ENCODE measurements at regions of chr9 and their contacts with region 1.

Region 1: DNA sequence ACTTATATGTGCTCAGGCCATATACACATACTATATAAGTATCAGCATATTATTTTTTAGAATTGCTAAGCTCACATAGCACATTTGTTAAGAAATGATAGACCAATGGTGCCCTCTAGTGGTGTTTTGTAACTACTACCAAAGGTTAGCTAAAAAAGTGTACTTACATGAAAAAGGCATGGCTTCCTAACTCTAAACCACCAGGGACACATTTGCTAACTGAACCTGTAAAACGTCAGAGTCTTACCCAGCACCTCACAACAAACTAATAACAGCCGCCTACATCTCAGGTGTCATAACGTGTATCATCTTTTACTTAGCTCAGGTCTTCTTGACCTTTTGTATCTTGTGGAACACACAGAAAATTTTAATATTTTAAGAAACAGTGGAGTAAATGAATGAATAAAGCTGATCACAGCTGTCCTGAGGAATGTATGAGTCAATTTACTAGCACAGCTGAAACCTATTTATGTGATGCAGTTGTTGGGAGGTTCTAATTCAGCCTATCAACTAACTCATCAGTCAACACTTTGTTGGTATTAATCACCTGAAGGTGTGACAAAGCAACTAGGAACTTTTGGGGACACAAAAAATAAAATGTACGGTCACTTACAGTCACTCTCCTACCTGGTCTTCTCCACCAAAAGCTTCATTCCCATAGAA is 72.9 kb downstream of the BAAT start:
- DNase-seq: peak; percentile 38
- H3K4me3 ChIP-seq: no peak overlapping the region; a peak in 1 of 4 replicates
- H3K27ac ChIP-seq: no peak overlapping the region
- H3K4me1 ChIP-seq: peaks cover 0 to 5% of the 10 kb centered on the region in 2 experiments; a peak in 2 of 4 replicates
- H3K27me3 ChIP-seq: peaks cover 11% of the 10 kb centered on the region
- CTCF ChIP-seq: peak; percentile 82
- EP300 ChIP-seq: no peak
- RAD21 ChIP-seq: peak; percentile 85

Region 2: DNA sequence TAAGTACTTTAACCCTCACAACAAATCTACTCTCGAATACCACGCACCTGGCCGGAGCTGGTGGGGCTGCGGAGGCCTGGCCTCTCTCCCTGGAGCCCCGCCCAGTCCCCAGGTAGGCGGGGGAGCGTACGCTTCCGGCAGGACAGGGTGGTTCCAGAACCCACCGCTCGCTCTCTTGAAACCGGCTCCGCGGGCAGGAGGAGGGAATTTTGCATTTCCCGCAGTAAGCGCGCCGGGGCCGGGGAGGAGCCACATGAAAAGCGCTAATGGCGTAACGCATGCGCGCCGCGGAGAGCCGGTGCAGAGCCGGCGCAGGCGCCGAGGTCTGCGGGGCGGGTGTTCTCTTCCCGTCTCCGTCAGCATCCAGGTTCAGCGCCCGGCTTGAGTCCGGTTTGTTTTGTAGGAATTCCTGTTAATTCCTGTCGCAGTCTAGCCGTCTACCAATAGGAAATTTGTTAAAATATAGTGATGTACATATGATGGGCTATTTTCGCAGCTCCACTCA is 713.2 kb before region 1 on chr9:
- CTCF ChIA-PET with region 1: interaction called, 80 read pairs
- POLR2A ChIA-PET with region 1: no interaction called
- DNase-seq: peak; percentile 86
- H3K4me3 ChIP-seq: peak overlapping the region; percentile 63 to 66
- H3K27ac ChIP-seq: peak overlapping the region in 1 of 2 experiments; percentile 68; a peak in 2 of 4 replicates
- H3K4me1 ChIP-seq: peaks cover 0 to 9% of the 10 kb centered on the region in 2 experiments; a peak in 1 of 4 replicates
- H3K27me3 ChIP-seq: no peaks in the 10 kb centered on the region
- CTCF ChIP-seq: no peak
- EP300 ChIP-seq: no peak
- RAD21 ChIP-seq: no peak

Region 3: GRCh38 chr9:100700689-100701318 is 611.1 kb before region 1 on chr9:
- CTCF ChIA-PET with region 1: interaction called, 22 read pairs
- POLR2A ChIA-PET with region 1: no interaction called
- DNase-seq: peak; percentile 23
- H3K4me3 ChIP-seq: peak overlapping the region in 1 of 2 experiments; percentile 53; a peak in 1 of 4 replicates
- H3K27ac ChIP-seq: no peak overlapping the region
- H3K4me1 ChIP-seq: no peaks in the 10 kb centered on the region
- H3K27me3 ChIP-seq: no peaks in the 10 kb centered on the region
- CTCF ChIP-seq: peak; percentile 64
- EP300 ChIP-seq: no peak
- RAD21 ChIP-seq: peak; percentile 24; the same call in 1 of the 2 replicates

Region 4: DNA sequence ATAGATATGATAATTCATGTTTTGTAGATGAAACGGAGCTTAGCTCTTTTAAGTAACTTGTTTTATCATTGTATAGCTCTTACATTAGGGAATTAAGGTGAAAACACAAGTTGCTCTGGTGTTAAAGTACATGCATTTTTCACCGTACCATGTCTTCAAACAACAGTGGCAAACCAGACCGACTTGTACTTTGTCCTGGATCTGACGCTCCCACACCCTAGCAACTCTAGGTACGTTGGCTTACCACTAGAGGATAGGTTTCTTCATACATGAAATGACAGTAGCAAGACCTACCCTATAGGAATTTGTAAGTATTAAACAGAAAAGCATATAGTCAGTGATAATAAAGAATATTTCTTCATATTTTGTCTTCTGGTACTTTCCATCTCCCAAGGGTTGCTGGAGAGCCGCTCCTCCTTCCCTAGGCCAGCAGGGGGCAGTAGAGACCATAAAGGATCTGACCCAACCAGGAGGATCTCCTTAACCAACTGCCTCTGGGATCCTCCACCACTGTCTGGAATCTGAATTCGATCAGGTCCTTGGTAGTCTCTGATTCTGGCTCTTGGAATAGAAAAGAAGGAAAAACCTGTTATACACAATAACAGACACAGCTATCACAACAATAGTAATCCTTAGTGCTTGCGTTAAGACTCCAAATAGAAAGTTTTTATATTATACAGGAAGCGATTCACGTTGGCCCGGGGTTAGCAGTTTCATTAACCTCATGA is 597.4 kb before region 1 on chr9:
- CTCF ChIA-PET with region 1: interaction called, 41 read pairs
- POLR2A ChIA-PET with region 1: no interaction called
- DNase-seq: peak; percentile 74
- H3K4me3 ChIP-seq: peak overlapping the region in 1 of 2 experiments; percentile 41; a peak in 1 of 4 replicates
- H3K27ac ChIP-seq: no peak overlapping the region
- H3K4me1 ChIP-seq: no peaks in the 10 kb centered on the region
- H3K27me3 ChIP-seq: no peaks in the 10 kb centered on the region; the same call in 1 of the 2 replicates
- CTCF ChIP-seq: peak; percentile 92
- EP300 ChIP-seq: no peak
- RAD21 ChIP-seq: peak; percentile 77

Region 5: GRCh38 chr9:100999906-101000544 is 311.9 kb before region 1 on chr9:
- CTCF ChIA-PET with region 1: no interaction called
- POLR2A ChIA-PET with region 1: no interaction called
- DNase-seq: no peak
- H3K4me3 ChIP-seq: no peak overlapping the region
- H3K27ac ChIP-seq: peak overlapping the region in 1 of 2 experiments; percentile 55; a peak in 1 of 4 replicates
- H3K4me1 ChIP-seq: no peaks in the 10 kb centered on the region
- H3K27me3 ChIP-seq: no peaks in the 10 kb centered on the region
- CTCF ChIP-seq: no peak
- EP300 ChIP-seq: no peak
- RAD21 ChIP-seq: no peak

Region 6: GRCh38 chr9:101119206-101119819 is 192.6 kb before region 1 on chr9:
- CTCF ChIA-PET with region 1: interaction called, 31 read pairs
- POLR2A ChIA-PET with region 1: no interaction called
- DNase-seq: peak; percentile 44
- H3K4me3 ChIP-seq: no peak overlapping the region; a peak in 1 of 4 replicates
- H3K27ac ChIP-seq: no peak overlapping the region
- H3K4me1 ChIP-seq: no peaks in the 10 kb centered on the region
- H3K27me3 ChIP-seq: no peaks in the 10 kb centered on the region
- CTCF ChIP-seq: peak; percentile 76
- EP300 ChIP-seq: no peak
- RAD21 ChIP-seq: peak; percentile 71

Region 7: GRCh38 chr9:101299901-101300300 is 12.0 kb before region 1 on chr9:
- CTCF ChIA-PET with region 1: interaction called, 18 read pairs
- POLR2A ChIA-PET with region 1: no interaction called
- DNase-seq: no peak
- H3K4me3 ChIP-seq: no peak overlapping the region
- H3K27ac ChIP-seq: no peak overlapping the region
- H3K4me1 ChIP-seq: no peaks in the 10 kb centered on the region
- H3K27me3 ChIP-seq: no peaks in the 10 kb centered on the region; the same call in 1 of the 2 replicates
- CTCF ChIP-seq: no peak
- EP300 ChIP-seq: no peak
- RAD21 ChIP-seq: no peak

Region 8: DNA sequence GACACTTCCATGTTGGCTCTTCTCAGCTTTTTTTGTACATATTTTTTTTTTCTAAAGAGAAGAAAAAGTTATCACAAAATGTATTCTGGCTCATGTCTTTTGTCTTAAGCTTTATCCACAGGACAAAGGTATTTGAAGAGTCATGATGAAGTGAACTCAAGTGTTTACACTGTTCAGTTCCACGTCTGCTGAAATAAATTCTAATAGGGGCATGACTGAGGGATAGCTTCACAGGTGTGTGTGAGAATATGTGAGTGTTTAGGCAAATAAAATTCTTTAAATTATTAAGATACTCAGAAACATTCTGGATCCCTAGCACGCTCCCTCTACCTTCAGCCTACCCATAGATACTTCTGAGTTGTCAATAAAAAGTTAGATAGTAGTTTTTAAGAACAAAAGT is 13.2 kb after region 1 on chr9:
- CTCF ChIA-PET with region 1: interaction called, 11 read pairs
- POLR2A ChIA-PET with region 1: no interaction called
- DNase-seq: no peak
- H3K4me3 ChIP-seq: no peak overlapping the region
- H3K27ac ChIP-seq: no peak overlapping the region
- H3K4me1 ChIP-seq: no peaks in the 10 kb centered on the region
- H3K27me3 ChIP-seq: no peaks in the 10 kb centered on the region
- CTCF ChIP-seq: no peak
- EP300 ChIP-seq: no peak
- RAD21 ChIP-seq: no peak

Region 9: GRCh38 chr9:102135768-102136167 is 823.9 kb after region 1 on chr9:
- CTCF ChIA-PET with region 1: no interaction called
- POLR2A ChIA-PET with region 1: no interaction called
- DNase-seq: no peak
- H3K4me3 ChIP-seq: no peak overlapping the region
- H3K27ac ChIP-seq: no peak overlapping the region
- H3K4me1 ChIP-seq: no peaks in the 10 kb centered on the region
- H3K27me3 ChIP-seq: no peaks in the 10 kb centered on the region
- CTCF ChIP-seq: no peak
- EP300 ChIP-seq: no peak
- RAD21 ChIP-seq: no peak